Common myeloid progenitor, CD34-positive (primary cell): ENCODE measurements at regions of chr1 and their contacts with region 1.

Region 1: DNA sequence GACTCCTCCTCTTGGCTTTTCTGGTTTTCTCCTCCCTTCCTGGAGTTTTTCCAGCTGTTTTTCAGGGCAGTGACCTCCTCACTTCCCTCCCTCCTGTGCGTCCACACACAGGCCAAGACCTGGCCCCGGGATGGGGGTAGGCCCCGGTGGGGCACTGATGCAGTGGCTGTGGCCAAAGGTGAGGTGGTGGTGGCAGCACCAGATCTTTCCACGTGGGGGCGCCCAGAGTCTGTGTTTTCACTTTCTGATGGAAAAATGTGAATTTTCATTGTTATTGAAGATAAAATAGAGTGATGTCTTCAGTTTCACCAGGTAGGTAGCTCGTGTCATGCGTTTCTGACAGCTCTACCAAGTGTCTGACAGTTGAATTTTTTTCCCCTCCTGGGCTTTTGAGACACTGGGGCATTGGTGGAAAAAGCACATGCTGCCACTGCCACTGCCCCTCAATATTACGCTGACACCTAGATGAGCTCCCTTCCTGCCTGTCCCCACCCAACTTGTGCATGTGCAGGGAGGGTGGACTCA is 39.9 kb upstream of the MAGOH start:
- DNase-seq: peak; percentile 25 to 55 (median 36)
- H3K4me3 ChIP-seq: no peak overlapping the region
- H3K27ac ChIP-seq: no peak overlapping the region
- H3K4me1 ChIP-seq: peaks cover 0 to 9% (median 0%) of the 10 kb centered on the region in 4 experiments
- H3K27me3 ChIP-seq: no peaks in the 10 kb centered on the region

Region 2: DNA sequence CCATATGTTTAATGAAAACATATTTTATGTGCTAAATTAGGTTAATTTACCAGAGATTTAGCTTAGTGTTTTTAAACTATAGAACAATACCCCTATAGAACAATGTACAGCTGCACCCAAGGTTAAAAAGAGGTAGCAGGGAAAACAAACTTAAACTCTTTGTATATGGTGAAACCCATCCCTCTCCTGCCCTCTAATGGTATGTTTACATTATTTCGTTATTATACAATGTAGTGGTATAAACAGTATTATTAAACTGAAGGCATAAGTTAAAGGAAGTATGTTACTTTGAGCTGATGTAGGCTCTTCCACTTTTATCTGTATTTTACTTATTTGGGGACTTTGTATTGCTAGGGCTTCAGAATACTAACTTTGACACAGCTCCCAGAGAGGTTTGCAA is 452.4 kb before region 1 on chr1:
- CTCF ChIA-PET with region 1: no interaction called
- POLR2A ChIA-PET with region 1: no interaction called
- DNase-seq: peak in 2 of 3 donors; percentile 51 to 54
- H3K4me3 ChIP-seq: no peak overlapping the region
- H3K27ac ChIP-seq: no peak overlapping the region
- H3K4me1 ChIP-seq: no peaks in the 10 kb centered on the region
- H3K27me3 ChIP-seq: no peaks in the 10 kb centered on the region

Region 3: DNA sequence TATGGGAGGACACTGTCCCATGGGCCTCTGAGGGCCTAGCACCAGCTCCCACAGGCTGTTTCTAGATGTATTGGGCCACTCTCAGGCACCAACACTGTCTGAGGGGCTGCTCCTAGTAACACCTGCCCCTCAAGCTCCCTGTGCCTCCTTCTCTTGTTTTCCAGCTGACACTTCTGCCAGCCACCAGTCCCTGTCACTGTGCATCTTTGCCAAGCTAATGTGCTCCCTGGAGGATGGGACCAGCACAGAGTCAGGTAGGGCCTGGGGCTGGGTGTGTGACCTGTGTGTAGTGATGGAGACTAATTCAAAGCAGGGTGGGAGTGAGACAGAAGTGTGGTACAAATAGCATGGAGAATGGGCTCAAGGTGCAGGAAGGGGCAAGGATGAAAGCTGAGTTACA is 10.5 kb before region 1 on chr1:
- CTCF ChIA-PET with region 1: interaction called, 16 read pairs
- POLR2A ChIA-PET with region 1: no interaction called
- DNase-seq: no peak
- H3K4me3 ChIP-seq: no peak overlapping the region
- H3K27ac ChIP-seq: no peak overlapping the region
- H3K4me1 ChIP-seq: no peaks in the 10 kb centered on the region
- H3K27me3 ChIP-seq: no peaks in the 10 kb centered on the region

Region 4: DNA sequence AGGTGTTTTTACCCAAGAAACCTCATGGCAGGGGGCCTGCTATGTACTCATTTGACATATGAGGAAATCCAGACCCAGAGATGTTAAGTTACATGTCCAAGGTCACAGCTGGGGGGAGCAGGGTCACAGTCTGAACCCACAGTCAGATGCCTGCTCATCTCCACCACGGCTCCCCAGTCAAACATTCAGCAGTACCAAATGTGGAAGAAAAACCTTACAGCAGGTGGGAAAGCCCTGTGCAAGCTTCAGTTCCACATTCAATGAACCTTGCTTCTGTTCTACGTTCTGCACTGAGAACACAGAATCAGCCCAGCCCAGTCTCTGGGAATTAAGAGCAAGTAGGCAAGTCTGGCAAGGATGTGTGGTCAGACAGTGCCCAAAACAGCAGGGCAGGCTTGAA is 14.4 kb after region 1 on chr1:
- CTCF ChIA-PET with region 1: interaction called, 19 read pairs
- POLR2A ChIA-PET with region 1: no interaction called
- DNase-seq: no peak
- H3K4me3 ChIP-seq: no peak overlapping the region
- H3K27ac ChIP-seq: no peak overlapping the region
- H3K4me1 ChIP-seq: peaks cover 1 to 39% (median 23%) of the 10 kb centered on the region in 4 experiments
- H3K27me3 ChIP-seq: no peaks in the 10 kb centered on the region

Region 5: DNA sequence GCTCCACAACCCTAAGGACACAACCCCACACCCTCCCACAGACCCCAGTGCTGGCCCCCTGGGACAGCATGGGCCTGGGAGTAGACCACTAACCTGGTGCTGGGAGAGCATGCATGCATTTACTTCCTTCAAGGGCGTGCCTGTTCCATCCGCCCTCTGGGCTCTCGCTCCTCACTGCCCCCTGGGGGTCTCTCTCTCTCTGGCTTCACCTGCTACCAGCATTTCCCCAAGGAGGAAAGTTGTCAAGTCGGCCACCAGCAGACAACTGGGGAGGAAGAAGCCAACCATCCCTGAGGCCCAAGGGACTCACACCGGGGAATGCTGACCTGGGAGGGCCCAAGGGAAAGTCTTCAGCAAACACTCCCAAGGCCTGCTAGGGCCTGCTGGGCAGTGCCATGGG is 43.1 kb after region 1 on chr1:
- CTCF ChIA-PET with region 1: interaction called, 79 read pairs
- POLR2A ChIA-PET with region 1: no interaction called
- DNase-seq: peak; percentile 47 to 60 (median 57)
- H3K4me3 ChIP-seq: no peak overlapping the region
- H3K27ac ChIP-seq: no peak overlapping the region
- H3K4me1 ChIP-seq: peaks cover 3 to 68% (median 49%) of the 10 kb centered on the region in 4 experiments
- H3K27me3 ChIP-seq: no peaks in the 10 kb centered on the region

Region 6: GRCh38 chr1:53359225-53359923 is 81.1 kb after region 1 on chr1:
- CTCF ChIA-PET with region 1: interaction called, 10 read pairs
- POLR2A ChIA-PET with region 1: no interaction called
- DNase-seq: no peak
- H3K4me3 ChIP-seq: no peak overlapping the region
- H3K27ac ChIP-seq: no peak overlapping the region
- H3K4me1 ChIP-seq: no peaks in the 10 kb centered on the region
- H3K27me3 ChIP-seq: no peaks in the 10 kb centered on the region

Region 7: GRCh38 chr1:53393325-53393792 is 115.1 kb after region 1 on chr1:
- CTCF ChIA-PET with region 1: interaction called, 124 read pairs
- POLR2A ChIA-PET with region 1: interaction called, 3 read pairs
- DNase-seq: peak; percentile 33 to 48 (median 37)
- H3K4me3 ChIP-seq: no peak overlapping the region
- H3K27ac ChIP-seq: no peak overlapping the region
- H3K4me1 ChIP-seq: peaks cover 0 to 15% (median 10%) of the 10 kb centered on the region in 4 experiments
- H3K27me3 ChIP-seq: no peaks in the 10 kb centered on the region

Region 8: DNA sequence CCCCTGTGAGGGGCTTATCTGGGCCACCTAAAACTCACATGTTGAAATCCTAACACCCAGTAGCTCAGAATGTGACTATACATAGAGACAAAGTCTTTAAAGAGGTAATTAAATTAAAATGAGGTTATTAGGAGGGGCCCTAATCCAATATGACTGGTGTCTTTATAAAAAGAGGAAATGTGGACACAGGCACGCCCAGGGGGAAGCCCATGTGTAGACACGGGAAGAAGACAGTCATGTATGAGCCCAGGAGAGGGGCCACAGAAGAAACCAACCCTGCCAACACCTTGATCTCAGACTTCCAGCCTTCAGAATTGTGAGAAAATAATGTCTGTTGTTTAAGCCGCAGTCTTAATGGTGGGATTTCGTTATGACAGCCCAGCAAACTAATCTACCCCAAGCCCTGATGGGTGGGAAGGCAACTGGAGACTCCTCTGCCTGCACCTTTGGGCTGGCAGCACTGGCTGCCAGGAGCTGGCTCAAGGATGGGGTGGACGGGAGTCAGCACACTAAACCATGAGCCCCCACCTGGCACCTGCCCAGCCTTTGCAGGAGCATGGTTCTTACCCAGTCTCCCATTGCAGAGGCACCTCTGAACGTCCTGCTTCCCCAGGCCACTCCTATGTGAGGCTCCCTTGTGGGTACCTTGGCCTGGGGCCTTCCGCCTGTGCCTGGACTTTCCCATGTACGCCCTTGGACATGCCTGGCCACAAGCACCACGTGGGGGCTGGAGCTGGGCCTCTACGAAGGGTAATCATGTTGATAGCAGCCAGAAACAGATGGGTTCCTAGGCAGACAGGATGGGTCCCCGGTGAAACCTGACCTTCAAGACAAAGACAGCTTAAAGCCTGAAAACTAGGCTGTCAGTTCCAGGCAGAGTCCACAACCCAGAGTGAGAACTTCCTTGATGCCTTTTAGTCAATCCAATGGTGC is 123.8 kb after region 1 on chr1:
- CTCF ChIA-PET with region 1: interaction called, 124 read pairs
- POLR2A ChIA-PET with region 1: no interaction called
- DNase-seq: peak in 2 of 3 donors; percentile 23 to 26
- H3K4me3 ChIP-seq: no peak overlapping the region
- H3K27ac ChIP-seq: no peak overlapping the region
- H3K4me1 ChIP-seq: peaks cover 0 to 2% (median 0%) of the 10 kb centered on the region in 4 experiments
- H3K27me3 ChIP-seq: peaks cover 0 to 5% (median 0%) of the 10 kb centered on the region in 5 experiments

Region 9: DNA sequence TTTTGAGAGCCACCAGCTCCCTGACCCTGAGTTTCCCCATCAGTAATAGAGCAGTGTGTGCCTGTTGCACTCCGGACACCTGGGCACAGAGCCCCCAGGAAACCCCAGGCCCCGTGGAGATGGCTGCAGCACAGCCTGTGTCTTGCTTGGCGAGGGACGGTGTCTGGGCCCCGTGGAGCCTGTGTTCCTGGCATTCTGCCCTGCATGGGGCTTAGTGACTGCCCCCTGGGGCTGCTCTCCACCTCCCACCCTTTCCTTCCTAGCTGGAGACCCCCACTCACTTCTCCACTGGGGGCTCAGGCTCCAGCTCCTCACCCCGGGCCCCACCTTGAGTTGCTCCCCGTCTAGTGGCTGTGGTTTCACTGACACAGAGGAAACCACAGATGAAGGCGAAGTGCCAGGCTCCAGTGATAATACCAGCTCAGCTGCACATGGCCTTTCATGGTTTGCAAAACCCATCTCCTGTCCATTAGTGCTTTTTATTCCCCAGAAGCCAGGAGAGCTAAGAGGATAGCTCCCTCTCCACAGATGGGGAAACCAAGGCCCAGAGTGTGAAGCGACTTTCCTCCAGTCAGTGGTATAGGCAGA is 220.4 kb after region 1 on chr1:
- CTCF ChIA-PET with region 1: no interaction called
- POLR2A ChIA-PET with region 1: no interaction called
- DNase-seq: peak; percentile 38 to 76 (median 73)
- H3K4me3 ChIP-seq: peak overlapping the region in 1 of 7 experiments; percentile 29
- H3K27ac ChIP-seq: no peak overlapping the region
- H3K4me1 ChIP-seq: peaks cover 2 to 21% (median 14%) of the 10 kb centered on the region in 4 experiments
- H3K27me3 ChIP-seq: peaks cover 0 to 1% (median 0%) of the 10 kb centered on the region in 5 experiments